ENCODE measurements at regions of chrX and their contacts with region 1.

Region 1: GRCh38 chrX:133415276-133416105 is at the start of gene GPC4:
- DNase-seq: peak in 1 of 2 donors; percentile 82
- H3K4me3 ChIP-seq: peak within 1 kb of the TSS; percentile 77 to 79
- H3K27ac ChIP-seq: peak within 1 kb of the TSS; percentile 69 to 77
- H3K4me1 ChIP-seq: no peaks in the 10 kb centered on the region
- H3K27me3 ChIP-seq: no peaks in the 10 kb centered on the region
- CTCF ChIP-seq: peak in 1 of 3 experiments; percentile 19
- total RNA-seq, gene GPC4: 12.0 TPM

Region 2: DNA sequence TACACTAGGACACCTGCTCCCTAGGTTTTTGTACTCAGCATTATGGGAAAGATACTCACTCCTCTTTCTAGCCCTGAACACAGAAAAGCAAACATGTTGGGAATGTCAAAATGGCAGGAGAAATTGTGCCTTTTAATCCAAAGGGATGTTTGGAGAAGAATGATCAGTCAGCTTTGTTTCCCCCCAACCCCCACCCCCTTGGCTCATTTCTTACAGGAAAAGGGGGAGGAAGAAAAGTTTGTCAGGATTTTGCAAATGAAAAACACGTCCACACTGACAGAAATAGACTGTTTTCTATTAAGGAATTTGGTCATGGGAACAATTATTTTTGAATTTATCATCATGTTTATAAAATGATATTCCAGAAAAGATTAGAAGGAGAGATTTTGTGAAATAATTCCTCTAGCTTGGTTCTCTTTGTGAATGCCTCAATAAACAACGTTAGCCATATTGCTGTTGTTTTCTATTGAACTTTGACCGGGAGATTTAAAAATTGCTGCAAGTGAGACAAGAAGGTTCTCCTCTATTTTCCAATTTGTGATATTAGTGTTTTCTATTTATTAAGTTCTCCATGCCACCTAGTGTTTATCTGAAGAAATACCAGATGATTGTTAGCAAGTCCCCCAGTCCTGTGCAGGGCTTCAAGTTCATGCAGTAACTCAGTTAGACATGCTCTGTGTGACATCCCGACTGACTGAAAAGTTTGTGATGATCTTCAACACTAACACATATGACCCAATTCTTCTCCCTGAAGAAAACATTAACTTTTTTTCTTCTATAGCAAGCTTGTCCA is 166.0 kb before region 1 on chrX:
- intact Hi-C with region 1: loop called (anchors 5 kb)
- DNase-seq: no peak
- H3K4me3 ChIP-seq: no peak overlapping the region
- H3K27ac ChIP-seq: no peak overlapping the region
- H3K4me1 ChIP-seq: peaks cover 0 to 2% of the 10 kb centered on the region in 2 donors
- H3K27me3 ChIP-seq: no peaks in the 10 kb centered on the region
- CTCF ChIP-seq: no peak

Region 3: GRCh38 chrX:133335027-133335426 is 80.5 kb before region 1 on chrX:
- intact Hi-C with region 1: loop called (anchors 5 kb)
- DNase-seq: no peak
- H3K4me3 ChIP-seq: no peak overlapping the region
- H3K27ac ChIP-seq: no peak overlapping the region
- H3K4me1 ChIP-seq: no peaks in the 10 kb centered on the region
- H3K27me3 ChIP-seq: no peaks in the 10 kb centered on the region
- CTCF ChIP-seq: peak in 2 of 3 experiments; percentile 55 to 57

Region 4: DNA sequence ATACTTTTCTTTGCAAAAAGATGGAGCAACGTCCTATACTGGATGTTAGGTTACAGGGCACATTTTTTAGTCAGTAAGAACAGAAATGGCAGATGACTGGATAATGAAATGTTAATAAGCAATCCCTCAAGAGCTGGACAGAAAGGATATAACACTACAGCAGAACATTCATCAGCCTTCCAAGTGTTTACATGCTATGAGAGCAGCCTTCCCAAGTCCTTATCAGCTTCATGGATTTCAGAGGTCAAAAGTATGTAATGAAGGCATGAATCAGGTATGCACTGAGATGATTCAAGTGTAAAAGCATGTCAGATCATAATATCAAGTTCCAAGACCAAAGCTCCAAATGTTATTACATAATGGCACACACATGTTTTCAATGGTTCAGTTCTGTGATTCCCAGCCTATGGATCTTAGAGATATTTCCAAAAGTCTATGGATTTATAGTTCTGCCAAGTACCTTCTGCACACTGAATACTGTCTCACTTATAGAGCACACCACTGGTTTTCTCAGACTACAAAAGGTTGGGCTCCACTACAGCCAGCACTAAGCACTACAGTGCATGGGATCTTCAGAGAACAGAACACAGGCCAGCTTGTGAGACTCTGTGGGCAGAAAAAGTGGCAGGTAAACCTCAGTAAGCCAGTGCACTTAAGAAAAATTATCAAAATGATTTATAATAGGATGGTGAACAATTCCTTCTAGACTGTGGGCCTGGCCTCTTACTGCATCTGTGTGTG is 49.5 kb before region 1 on chrX:
- intact Hi-C with region 1: loop called (anchors 5 kb)
- DNase-seq: no peak
- H3K4me3 ChIP-seq: no peak overlapping the region
- H3K27ac ChIP-seq: no peak overlapping the region
- H3K4me1 ChIP-seq: peaks cover 0 to 5% of the 10 kb centered on the region in 2 donors
- H3K27me3 ChIP-seq: no peaks in the 10 kb centered on the region
- CTCF ChIP-seq: no peak

Region 5: DNA sequence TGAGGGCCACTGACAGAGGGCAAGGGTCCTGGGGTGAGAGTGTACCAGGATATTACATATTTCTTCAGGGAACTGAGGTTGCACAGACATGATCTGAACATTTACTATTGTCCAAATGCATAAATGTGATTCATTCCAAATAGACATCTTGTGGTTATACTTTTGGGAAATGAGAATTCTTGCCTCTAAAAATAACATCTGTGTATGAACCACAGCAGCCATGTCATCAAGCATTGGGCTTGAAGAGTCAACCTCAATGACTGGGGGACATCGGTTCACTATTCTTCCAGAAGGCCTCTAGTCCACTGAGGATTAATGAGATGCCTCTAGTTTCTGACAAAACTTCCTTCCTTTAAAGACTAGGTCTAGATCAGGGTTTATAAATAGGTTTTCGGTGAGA is 192.9 kb after region 1 on chrX:
- intact Hi-C with region 1: loop called (anchors 2 kb)
- DNase-seq: no peak
- H3K4me3 ChIP-seq: no peak overlapping the region
- H3K27ac ChIP-seq: peak overlapping the region; percentile 57 to 62
- H3K4me1 ChIP-seq: peaks cover 0 to 3% of the 10 kb centered on the region in 2 donors
- H3K27me3 ChIP-seq: no peaks in the 10 kb centered on the region
- CTCF ChIP-seq: no peak

Region 6: GRCh38 chrX:133660281-133660680 is 244.8 kb after region 1 on chrX:
- intact Hi-C with region 1: loop called (anchors 10 kb)
- DNase-seq: no peak
- H3K4me3 ChIP-seq: no peak overlapping the region
- H3K27ac ChIP-seq: no peak overlapping the region
- H3K4me1 ChIP-seq: no peaks in the 10 kb centered on the region
- H3K27me3 ChIP-seq: no peaks in the 10 kb centered on the region
- CTCF ChIP-seq: no peak

Measured in ascending aorta (tissue), 2 donors.